CD4-positive, alpha-beta memory T cell (primary cell): ENCODE measurements at regions of chr4 and their contacts with region 1.

Region 1: GRCh38 chr4:139030614-139031235 is 15.1 kb downstream of the NOCT start:
- DNase-seq: peak; percentile 72 to 76 (median 74)
- H3K4me3 ChIP-seq: no peak overlapping the region
- H3K4me3 Mint-ChIP-seq: no peak overlapping the region
- H3K27ac ChIP-seq: no peak overlapping the region
- H3K27ac Mint-ChIP-seq: peak overlapping the region in 5 of 7 donors; percentile 0 to 58 (median 19)
- H3K4me1 ChIP-seq: peaks cover 3% of the 10 kb centered on the region
- H3K4me1 Mint-ChIP-seq: peaks cover 6 to 11% (median 8%) of the 10 kb centered on the region in 4 donors
- H3K27me3 ChIP-seq: no peaks in the 10 kb centered on the region
- H3K27me3 Mint-ChIP-seq: no peaks in the 10 kb centered on the region

Region 2: GRCh38 chr4:139042981-139043460 is 12.3 kb after region 1 on chr4:
- CTCF ChIA-PET with region 1: interaction called, 11 read pairs
- POLR2A ChIA-PET with region 1: interaction called, 3 read pairs
- intact Hi-C with region 1: no loop called
- DNase-seq: no peak
- H3K4me3 ChIP-seq: no peak overlapping the region
- H3K4me3 Mint-ChIP-seq: no peak overlapping the region
- H3K27ac ChIP-seq: no peak overlapping the region
- H3K27ac Mint-ChIP-seq: peak overlapping the region in 4 of 7 donors; percentile 35 to 70 (median 46)
- H3K4me1 ChIP-seq: no peaks in the 10 kb centered on the region
- H3K4me1 Mint-ChIP-seq: peaks cover 4 to 15% (median 8%) of the 10 kb centered on the region in 4 donors
- H3K27me3 ChIP-seq: no peaks in the 10 kb centered on the region
- H3K27me3 Mint-ChIP-seq: no peaks in the 10 kb centered on the region

Region 3: GRCh38 chr4:139099366-139099982 is 68.7 kb after region 1 on chr4:
- CTCF ChIA-PET with region 1: interaction called, 75 read pairs
- POLR2A ChIA-PET with region 1: no interaction called
- intact Hi-C with region 1: loop called (anchors 1 kb)
- DNase-seq: peak; percentile 70 to 78 (median 73)
- H3K4me3 ChIP-seq: no peak overlapping the region
- H3K4me3 Mint-ChIP-seq: no peak overlapping the region
- H3K27ac ChIP-seq: no peak overlapping the region
- H3K27ac Mint-ChIP-seq: peak overlapping the region in 1 of 7 donors; percentile 43
- H3K4me1 ChIP-seq: no peaks in the 10 kb centered on the region
- H3K4me1 Mint-ChIP-seq: peaks cover 0 to 6% (median 3%) of the 10 kb centered on the region in 4 donors
- H3K27me3 ChIP-seq: no peaks in the 10 kb centered on the region
- H3K27me3 Mint-ChIP-seq: no peaks in the 10 kb centered on the region

Region 4: DNA sequence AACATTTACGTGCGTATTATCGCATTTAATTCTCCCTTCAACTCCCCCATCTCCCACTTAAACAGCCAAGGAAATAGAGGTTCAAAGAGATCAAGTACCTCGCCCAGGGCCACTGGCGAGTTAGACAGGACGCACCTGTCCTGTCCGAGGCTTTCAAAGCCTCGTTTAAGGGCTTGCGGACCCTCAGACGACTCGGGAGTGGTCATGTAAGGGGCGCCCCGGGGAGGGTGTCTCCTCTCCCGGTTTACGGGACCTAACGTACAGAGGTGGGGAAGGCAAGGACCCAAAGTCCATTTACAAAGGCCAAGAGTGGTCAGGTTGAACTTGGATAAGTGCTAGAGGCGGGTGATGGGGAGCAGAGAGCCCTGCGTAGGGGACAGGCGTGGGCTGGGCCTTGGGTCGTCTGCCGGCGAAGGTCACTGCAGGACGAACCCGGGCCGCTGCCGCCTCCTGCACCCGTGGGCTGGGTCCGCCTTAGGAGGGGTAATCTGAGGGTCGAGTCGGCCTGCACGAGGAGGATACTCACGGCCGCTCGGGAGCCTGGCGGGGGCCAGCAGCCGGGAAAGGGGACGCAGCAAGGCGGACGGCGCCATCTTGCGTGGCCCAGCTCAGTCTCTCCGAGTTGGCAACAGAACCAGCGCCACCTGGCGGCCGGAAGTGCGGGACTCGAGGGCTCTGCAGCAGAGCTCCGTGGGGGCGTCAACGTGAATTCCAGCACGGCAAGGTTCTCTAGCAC is 264.6 kb after region 1 on chr4:
- CTCF ChIA-PET with region 1: interaction called, 47 read pairs
- POLR2A ChIA-PET with region 1: interaction called, 11 read pairs
- intact Hi-C with region 1: loop called (anchors 1 kb)
- DNase-seq: peak; percentile 90 to 96 (median 94)
- H3K4me3 ChIP-seq: peak overlapping the region; percentile 84 to 92
- H3K4me3 Mint-ChIP-seq: peak overlapping the region; percentile 86 to 99 (median 94)
- H3K27ac ChIP-seq: peak overlapping the region; percentile 86
- H3K27ac Mint-ChIP-seq: peak overlapping the region; percentile 93 to 99 (median 97)
- H3K4me1 ChIP-seq: peaks cover 40% of the 10 kb centered on the region
- H3K4me1 Mint-ChIP-seq: peaks cover 14 to 38% (median 25%) of the 10 kb centered on the region in 4 donors
- H3K27me3 ChIP-seq: no peaks in the 10 kb centered on the region
- H3K27me3 Mint-ChIP-seq: no peaks in the 10 kb centered on the region

Region 5: DNA sequence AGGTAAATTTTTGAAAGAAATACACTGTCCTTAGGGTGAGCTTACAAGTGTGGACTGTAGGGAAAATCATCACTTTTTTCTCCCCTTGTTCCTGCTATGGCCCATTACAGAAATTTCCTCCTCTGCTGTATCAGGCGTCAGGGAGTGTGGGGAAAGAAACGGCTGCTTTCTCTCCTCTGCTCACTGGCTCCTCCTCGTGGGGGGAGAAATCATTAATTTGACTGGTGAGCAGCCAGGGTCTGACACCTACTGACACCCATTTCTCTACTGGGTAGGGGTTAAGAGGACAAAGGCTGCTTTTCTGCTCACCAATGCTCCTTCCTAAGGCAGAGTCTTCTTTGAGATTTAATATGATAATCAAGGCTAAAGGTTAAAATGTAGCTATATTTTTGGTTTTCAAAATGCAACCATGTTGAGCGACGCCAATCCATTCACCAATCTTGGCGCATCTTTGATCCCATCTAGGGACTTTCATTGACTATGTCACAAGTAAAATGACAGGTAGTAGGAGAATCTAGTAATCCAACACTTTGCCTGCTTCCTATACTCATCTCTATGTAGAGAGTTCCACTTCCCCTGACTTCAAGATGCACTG is 500.2 kb after region 1 on chr4:
- CTCF ChIA-PET with region 1: interaction called, 38 read pairs
- POLR2A ChIA-PET with region 1: no interaction called
- intact Hi-C with region 1: no loop called
- DNase-seq: peak; percentile 41 to 62 (median 57)
- H3K4me3 ChIP-seq: no peak overlapping the region
- H3K4me3 Mint-ChIP-seq: peak overlapping the region in 1 of 8 donors; percentile 27
- H3K27ac ChIP-seq: no peak overlapping the region
- H3K27ac Mint-ChIP-seq: peak overlapping the region in 4 of 7 donors; percentile 24 to 81 (median 61)
- H3K4me1 ChIP-seq: peaks cover 8% of the 10 kb centered on the region
- H3K4me1 Mint-ChIP-seq: peaks cover 8 to 17% (median 14%) of the 10 kb centered on the region in 4 donors
- H3K27me3 ChIP-seq: no peaks in the 10 kb centered on the region
- H3K27me3 Mint-ChIP-seq: no peaks in the 10 kb centered on the region